IMR-90 (cell line): ENCODE measurements at regions of chr21 and their contacts with region 1.

Region 1: GRCh38 chr21:43015921-43016540 is 41.7 kb downstream of the PKNOX1 start:
- DNase-seq: no peak
- ATAC-seq: no peak
- H3K4me3 ChIP-seq: no peak overlapping the region
- H3K27ac ChIP-seq: no peak overlapping the region
- H3K4me1 ChIP-seq: no peaks in the 10 kb centered on the region
- H3K27me3 ChIP-seq: no peaks in the 10 kb centered on the region
- CTCF ChIP-seq: no peak
- POLR2A ChIP-seq: no peak
- RAD21 ChIP-seq: no peak

Region 2: DNA sequence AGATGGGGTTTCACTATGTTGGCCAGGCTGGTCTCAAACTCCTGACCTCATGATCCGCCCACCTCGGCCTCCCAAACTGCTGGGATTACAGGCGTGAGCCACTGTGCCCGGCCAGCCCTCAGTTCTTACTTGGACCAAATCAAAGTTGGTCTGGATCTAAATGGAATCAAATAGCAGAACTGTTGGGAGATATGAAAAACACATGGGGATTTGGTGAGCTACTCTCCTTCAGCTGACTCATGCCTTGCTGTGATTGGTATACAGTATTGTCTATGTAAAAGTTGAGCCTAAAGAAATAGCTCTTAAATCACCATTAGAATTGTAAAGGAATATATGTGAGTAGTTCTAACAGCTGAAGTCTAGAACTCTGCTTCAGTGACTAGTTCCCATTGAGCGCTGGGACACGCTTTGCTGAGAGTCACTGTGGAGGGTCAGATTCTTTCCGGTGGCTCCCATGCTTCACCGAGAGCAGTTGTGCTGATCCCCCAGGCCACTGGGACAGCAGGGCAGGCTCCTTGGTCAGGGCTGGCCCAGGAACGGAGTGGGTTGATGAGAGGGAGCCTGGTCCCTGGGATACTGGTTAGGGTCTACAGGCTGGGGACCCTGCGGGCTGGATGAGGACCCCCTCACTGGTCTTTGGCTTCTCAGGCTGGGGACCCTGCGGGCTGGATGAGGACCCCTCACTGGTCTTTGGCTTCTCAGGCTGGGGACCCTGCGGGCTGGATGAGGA is 27.6 kb before region 1 on chr21:
- CTCF ChIA-PET with region 1: no interaction called
- POLR2A ChIA-PET with region 1: interaction called, 12 read pairs
- dilution Hi-C with region 1: no loop called
- in situ Hi-C with region 1: no loop called
- intact Hi-C with region 1: no loop called
- DNase-seq: peak; percentile 82
- ATAC-seq: peak; percentile 64
- H3K4me3 ChIP-seq: no peak overlapping the region
- H3K27ac ChIP-seq: peak overlapping the region; percentile 92
- H3K4me1 ChIP-seq: peaks cover 34% of the 10 kb centered on the region
- H3K27me3 ChIP-seq: no peaks in the 10 kb centered on the region
- CTCF ChIP-seq: no peak
- POLR2A ChIP-seq: no peak
- RAD21 ChIP-seq: no peak